Activated CD4-positive, alpha-beta T cell treated with anti-CD3 and anti-CD28 coated beads for 36 hours (primary cell): ENCODE measurements at regions of chr2 and their contacts with region 1.

Region 1: GRCh38 chr2:13488965-13489364 is 772.2 kb downstream of the TRIB2 start:
- DNase-seq: no peak
- ATAC-seq: no peak
- H3K4me3 Mint-ChIP-seq: no peak overlapping the region
- H3K27ac Mint-ChIP-seq: no peak overlapping the region
- H3K4me1 Mint-ChIP-seq: no peaks in the 10 kb centered on the region
- H3K27me3 Mint-ChIP-seq: no peaks in the 10 kb centered on the region

Region 2: DNA sequence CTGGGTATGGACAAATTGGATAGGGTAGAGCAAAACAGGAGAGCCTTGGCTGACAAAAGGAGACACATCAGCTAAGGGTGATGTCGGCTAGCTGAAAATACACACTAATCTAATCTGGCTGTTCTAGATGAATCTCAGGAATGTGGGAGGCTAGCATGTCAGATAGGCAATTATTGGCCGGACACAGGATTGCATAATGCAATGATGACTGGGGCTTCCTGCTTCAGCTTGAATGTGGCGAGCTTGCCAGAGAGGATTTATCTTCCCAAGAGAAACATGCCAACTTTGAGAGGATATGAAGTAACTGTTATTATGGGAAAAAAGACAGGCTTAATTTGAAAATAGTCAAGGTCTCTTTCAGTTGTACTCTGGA is 669.9 kb before region 1 on chr2:
- CTCF ChIA-PET with region 1: no interaction called
- POLR2A ChIA-PET with region 1: no interaction called
- intact Hi-C with region 1: loop called in 1 of 2 experiments (anchors 5 kb)
- DNase-seq: no peak
- ATAC-seq: no peak
- H3K4me3 Mint-ChIP-seq: no peak overlapping the region
- H3K27ac Mint-ChIP-seq: no peak overlapping the region
- H3K4me1 Mint-ChIP-seq: peaks cover 48% of the 10 kb centered on the region
- H3K27me3 Mint-ChIP-seq: peaks cover 5% of the 10 kb centered on the region